ENCODE measurements at regions of chr1 and their contacts with region 1.

Region 1: DNA sequence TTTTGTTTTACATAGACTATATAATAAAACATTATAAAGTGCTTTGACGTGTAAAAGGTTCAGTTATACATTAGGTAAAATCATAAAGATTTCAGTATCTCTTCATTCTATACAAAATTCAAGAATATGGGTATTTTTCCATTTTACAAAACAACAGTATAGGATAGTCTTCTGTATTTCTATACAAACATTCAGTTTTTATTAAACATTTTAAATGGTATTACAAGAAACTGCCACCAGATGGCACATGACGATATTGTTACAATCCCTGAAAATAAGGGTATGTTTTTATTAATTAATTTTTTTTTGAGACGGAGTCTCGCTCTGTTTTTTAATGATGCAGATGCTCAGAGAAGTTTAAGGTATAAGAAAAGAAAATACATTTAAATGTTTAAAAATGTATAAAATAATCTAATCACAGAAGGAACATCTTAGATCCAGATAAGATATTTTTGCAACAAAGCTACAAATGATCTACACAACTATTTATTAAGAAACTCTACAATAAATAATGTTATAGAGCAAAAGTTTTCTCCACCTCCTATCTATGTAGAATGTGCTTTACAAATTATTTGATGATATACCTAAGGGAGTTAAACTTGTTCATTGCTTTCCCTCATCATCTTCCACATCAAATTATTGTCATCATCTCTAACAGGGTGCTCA is 23.5 kb upstream of the RSBN1 start:
- DNase-seq: no peak
- H3K4me3 ChIP-seq: no peak overlapping the region
- CTCF ChIP-seq: peak in 1 of 3 donors; percentile 13
- POLR2A ChIP-seq: no peak

Region 2: GRCh38 chr1:113579256-113580018 is 256.3 kb before region 1 on chr1:
- intact Hi-C with region 1: no loop called
- DNase-seq: no peak
- H3K4me3 ChIP-seq: no peak overlapping the region
- CTCF ChIP-seq: no peak
- POLR2A ChIP-seq: no peak

Region 3: GRCh38 chr1:113857776-113858175 is 22.0 kb after region 1 on chr1:
- intact Hi-C with region 1: loop called (anchors 1 kb)
- DNase-seq: no peak
- H3K4me3 ChIP-seq: no peak overlapping the region
- CTCF ChIP-seq: no peak
- POLR2A ChIP-seq: no peak

Region 4: GRCh38 chr1:113891631-113892220 is 56.0 kb after region 1 on chr1:
- intact Hi-C with region 1: no loop called
- DNase-seq: no peak
- H3K4me3 ChIP-seq: no peak overlapping the region
- CTCF ChIP-seq: no peak
- POLR2A ChIP-seq: no peak

Region 5: GRCh38 chr1:113904674-113905434 is 69.1 kb after region 1 on chr1 and contains the starts of genes AP4B1 and DCLRE1B:
- intact Hi-C with region 1: loop called (anchors 10 kb)
- DNase-seq: peak; percentile 98 to 100
- H3K4me3 ChIP-seq: peak within 1 kb of the TSS; percentile 58
- CTCF ChIP-seq: peak in 1 of 3 donors; percentile 64
- POLR2A ChIP-seq: no peak
- total RNA-seq, gene AP4B1: 5.3 to 19.1 (median 5.9) TPM
- total RNA-seq, gene DCLRE1B: 2.1 to 4.4 (median 3.5) TPM

Region 6: DNA sequence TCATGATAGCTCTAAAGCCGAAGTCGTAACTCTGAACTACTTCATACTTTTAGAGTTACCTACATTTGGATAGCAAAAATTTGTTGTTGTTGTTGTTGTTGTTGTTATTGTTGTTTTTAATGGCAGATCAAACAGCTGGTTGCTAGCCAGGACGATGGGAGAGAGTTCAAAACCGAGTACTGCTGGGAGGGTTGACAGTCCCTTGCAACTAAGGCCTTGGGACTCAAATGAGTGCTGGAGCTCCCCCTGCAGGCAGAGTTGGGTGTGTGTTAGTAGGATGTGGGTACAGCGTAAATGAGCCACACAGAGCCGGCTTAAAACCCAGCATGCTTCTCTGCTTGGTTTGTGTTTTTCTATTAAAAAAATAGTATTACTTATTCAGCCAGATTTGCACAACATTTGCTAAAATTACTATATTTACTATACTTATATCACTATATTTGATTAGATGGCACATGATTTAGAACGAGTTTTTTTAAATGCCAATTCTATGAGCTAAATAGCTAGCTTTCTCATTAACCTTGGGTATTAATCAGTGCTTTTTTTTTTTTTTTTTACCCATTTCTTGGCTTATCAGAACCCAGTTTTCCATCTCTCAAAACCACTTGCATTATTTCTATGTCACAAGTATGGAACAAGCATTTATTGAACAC is 447.1 kb after region 1 on chr1:
- intact Hi-C with region 1: loop called (anchors 10 kb)
- DNase-seq: peak; percentile 85 to 96
- H3K4me3 ChIP-seq: no peak overlapping the region
- CTCF ChIP-seq: peak in 1 of 3 donors; percentile 53
- POLR2A ChIP-seq: no peak